ENCODE measurements at regions of chr15 and their contacts with region 1.

Region 1: DNA sequence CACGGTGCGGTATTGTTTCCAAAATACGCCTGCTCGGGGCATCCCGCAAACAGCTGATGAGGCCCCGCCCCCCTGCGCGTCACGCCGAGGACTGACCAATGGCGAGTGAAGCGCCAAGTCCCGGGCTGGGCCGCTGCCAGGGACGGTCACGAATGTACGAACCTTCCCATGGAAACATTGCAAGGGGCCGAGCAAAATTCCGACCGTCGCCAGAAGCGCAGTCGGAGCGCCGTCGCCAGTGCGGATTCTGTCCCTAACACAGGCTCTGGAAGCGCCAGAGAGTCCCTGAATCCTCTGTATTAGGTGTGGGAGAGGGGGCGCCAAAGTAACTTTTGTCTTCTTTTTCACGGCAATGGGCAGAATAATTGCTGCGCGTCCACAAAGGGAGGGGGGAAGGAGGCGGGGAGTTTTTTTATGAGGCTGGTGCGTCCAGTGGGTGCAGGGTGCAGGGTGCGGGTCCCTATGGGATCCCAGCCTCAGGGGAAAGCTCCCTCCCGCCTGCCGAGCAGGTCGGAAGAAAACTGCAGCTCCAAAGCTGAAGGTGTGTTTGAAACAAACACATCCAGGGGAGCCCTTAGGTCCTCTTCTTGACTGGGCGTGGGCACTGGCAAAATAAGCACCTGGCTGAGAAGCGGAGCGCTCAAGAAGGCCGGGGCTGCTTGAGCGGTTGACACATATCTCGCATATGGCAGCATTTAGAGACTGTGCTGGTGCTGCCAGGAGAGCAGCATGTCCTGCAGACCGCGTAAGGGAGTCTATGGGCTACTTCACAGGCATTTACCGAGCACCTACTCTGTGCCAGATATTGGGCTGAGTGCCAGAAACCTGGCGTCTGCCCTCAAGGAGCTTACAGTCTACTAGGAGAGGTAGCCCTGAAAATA is at the start of gene BMF:
- DNase-seq: peak; percentile 99 to 100
- ATAC-seq: peak; percentile 76 to 80
- H3K4me3 ChIP-seq: peak within 1 kb of the TSS; percentile 62 to 88 (median 64)
- H3K27ac ChIP-seq: peak within 1 kb of the TSS; percentile 81 to 99 (median 92)
- H3K4me1 ChIP-seq: peaks cover 34% of the 10 kb centered on the region in 2 donors
- H3K27me3 ChIP-seq: no peaks in the 10 kb centered on the region
- CTCF ChIP-seq: peak in 3 of 5 experiments; percentile 8 to 30 (median 16)
- POLR2A ChIP-seq: no peak
- total RNA-seq, gene BMF: 0.82 to 11.6 (median 3.2) TPM

Region 2: GRCh38 chr15:39934397-39935071 is 174.6 kb before region 1 on chr15:
- in situ Hi-C with region 1: no loop called
- intact Hi-C with region 1: loop called (anchors 10 kb)
- DNase-seq: no peak
- ATAC-seq: peak in 1 of 2 donors; percentile 15
- H3K4me3 ChIP-seq: peak overlapping the region; percentile 76 to 82 (median 78)
- H3K27ac ChIP-seq: peak overlapping the region; percentile 81 to 89 (median 88)
- H3K4me1 ChIP-seq: peaks cover 20 to 22% of the 10 kb centered on the region in 2 donors
- H3K27me3 ChIP-seq: no peaks in the 10 kb centered on the region
- CTCF ChIP-seq: no peak
- POLR2A ChIP-seq: no peak

Region 3: GRCh38 chr15:40038638-40039543 is 70.2 kb before region 1 on chr15 and contains the start of gene SRP14:
- in situ Hi-C with region 1: loop called in 1 of 4 experiments (anchors 10 kb)
- intact Hi-C with region 1: loop called (anchors 1 kb)
- DNase-seq: peak; percentile 92 to 97
- ATAC-seq: peak; percentile 97 to 98
- H3K4me3 ChIP-seq: peak within 1 kb of the TSS; percentile 63 to 88 (median 83)
- H3K27ac ChIP-seq: peak within 1 kb of the TSS; percentile 90 to 95 (median 92)
- H3K4me1 ChIP-seq: peaks cover 26% of the 10 kb centered on the region in 2 donors
- H3K27me3 ChIP-seq: no peaks in the 10 kb centered on the region
- CTCF ChIP-seq: peak in 4 of 5 experiments; percentile 20 to 33 (median 30)
- POLR2A ChIP-seq: peak; percentile 79 to 82
- total RNA-seq, gene SRP14: 180 to 244 (median 208) TPM

Region 4: GRCh38 chr15:40044717-40045571 is 64.2 kb before region 1 on chr15:
- in situ Hi-C with region 1: loop called in 1 of 4 experiments (anchors 10 kb)
- intact Hi-C with region 1: no loop called
- DNase-seq: peak; percentile 79 to 84
- ATAC-seq: peak; percentile 80 to 87
- H3K4me3 ChIP-seq: peak overlapping the region in 2 of 4 donors; percentile 19 to 26
- H3K27ac ChIP-seq: peak overlapping the region; percentile 30 to 60 (median 49)
- H3K4me1 ChIP-seq: peaks cover 13 to 30% of the 10 kb centered on the region in 2 donors
- H3K27me3 ChIP-seq: no peaks in the 10 kb centered on the region
- CTCF ChIP-seq: peak; percentile 86 to 98 (median 91)
- POLR2A ChIP-seq: no peak

Region 5: GRCh38 chr15:40150163-40150925 is 41.2 kb after region 1 on chr15:
- in situ Hi-C with region 1: loop called in 1 of 4 experiments (anchors 5 kb)
- intact Hi-C with region 1: loop called (anchors 1 kb)
- DNase-seq: peak; percentile 64 to 82
- ATAC-seq: peak; percentile 96 to 97
- H3K4me3 ChIP-seq: no peak overlapping the region
- H3K27ac ChIP-seq: peak overlapping the region; percentile 61 to 83 (median 78)
- H3K4me1 ChIP-seq: peaks cover 18 to 22% of the 10 kb centered on the region in 2 donors
- H3K27me3 ChIP-seq: no peaks in the 10 kb centered on the region
- CTCF ChIP-seq: no peak
- POLR2A ChIP-seq: no peak

Region 6: GRCh38 chr15:40274350-40275274 is 165.5 kb after region 1 on chr15:
- in situ Hi-C with region 1: no loop called
- intact Hi-C with region 1: no loop called
- DNase-seq: peak; percentile 36 to 64
- ATAC-seq: peak; percentile 75 to 76
- H3K4me3 ChIP-seq: no peak overlapping the region
- H3K27ac ChIP-seq: no peak overlapping the region
- H3K4me1 ChIP-seq: peaks cover 2% of the 10 kb centered on the region in 2 donors
- H3K27me3 ChIP-seq: peaks cover 7 to 15% (median 10%) of the 10 kb centered on the region in 3 donors
- CTCF ChIP-seq: peak; percentile 99 to 100 (median 100)
- POLR2A ChIP-seq: no peak

Region 7: DNA sequence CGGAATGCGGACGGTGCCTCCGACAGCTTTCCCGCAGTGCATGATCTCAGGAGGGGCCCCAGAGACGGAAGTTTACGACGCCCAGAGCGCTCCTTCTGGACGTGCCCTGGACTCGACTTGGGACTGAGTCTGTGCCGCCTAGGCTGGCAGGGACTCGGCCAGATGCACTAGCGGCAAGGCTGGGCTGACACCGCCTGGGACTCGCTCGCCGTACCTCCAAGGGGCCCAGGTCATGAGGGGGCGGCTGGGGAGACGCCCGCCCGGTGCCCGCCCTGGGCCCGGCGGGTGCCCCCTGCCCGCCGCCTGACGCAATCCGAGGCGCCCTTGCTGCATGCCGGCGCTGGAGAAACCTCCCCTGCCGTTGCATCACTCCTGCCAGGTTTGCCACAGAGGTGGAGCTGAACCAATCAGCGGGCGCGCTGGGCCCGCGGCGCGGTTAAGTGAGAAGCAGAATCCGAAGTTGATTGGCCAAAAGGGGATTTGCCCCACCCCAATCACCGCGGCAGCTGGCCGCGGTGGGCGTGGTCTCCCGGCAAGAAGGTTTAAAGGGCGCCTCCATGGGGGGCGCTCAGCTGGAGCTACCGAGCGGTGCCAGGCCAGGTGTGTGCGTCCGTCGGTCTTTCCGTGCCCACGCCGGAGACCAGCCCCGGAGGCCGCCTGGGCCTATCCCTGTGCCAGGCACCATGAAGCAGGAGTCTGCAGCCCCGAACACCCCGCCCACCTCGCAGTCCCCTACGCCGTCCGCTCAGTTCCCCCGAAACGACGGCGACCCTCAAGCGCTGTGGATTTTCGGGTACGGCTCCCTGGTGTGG is 844.0 kb after region 1 on chr15 and contains the start of gene CHAC1:
- in situ Hi-C with region 1: no loop called
- intact Hi-C with region 1: loop called (anchors 10 kb)
- DNase-seq: peak; percentile 95 to 98
- ATAC-seq: peak; percentile 55 to 57
- H3K4me3 ChIP-seq: peak within 1 kb of the TSS; percentile 76 to 96 (median 87)
- H3K27ac ChIP-seq: peak within 1 kb of the TSS; percentile 91 to 99 (median 96)
- H3K4me1 ChIP-seq: peaks cover 40 to 56% of the 10 kb centered on the region in 2 donors
- H3K27me3 ChIP-seq: no peaks in the 10 kb centered on the region
- CTCF ChIP-seq: peak in 1 of 5 experiments; percentile 13
- POLR2A ChIP-seq: peak; percentile 97 to 99
- total RNA-seq, gene CHAC1: 93.4 to 320 (median 139) TPM